ENCODE measurements at regions of chr12 and their contacts with region 1.

Region 1: DNA sequence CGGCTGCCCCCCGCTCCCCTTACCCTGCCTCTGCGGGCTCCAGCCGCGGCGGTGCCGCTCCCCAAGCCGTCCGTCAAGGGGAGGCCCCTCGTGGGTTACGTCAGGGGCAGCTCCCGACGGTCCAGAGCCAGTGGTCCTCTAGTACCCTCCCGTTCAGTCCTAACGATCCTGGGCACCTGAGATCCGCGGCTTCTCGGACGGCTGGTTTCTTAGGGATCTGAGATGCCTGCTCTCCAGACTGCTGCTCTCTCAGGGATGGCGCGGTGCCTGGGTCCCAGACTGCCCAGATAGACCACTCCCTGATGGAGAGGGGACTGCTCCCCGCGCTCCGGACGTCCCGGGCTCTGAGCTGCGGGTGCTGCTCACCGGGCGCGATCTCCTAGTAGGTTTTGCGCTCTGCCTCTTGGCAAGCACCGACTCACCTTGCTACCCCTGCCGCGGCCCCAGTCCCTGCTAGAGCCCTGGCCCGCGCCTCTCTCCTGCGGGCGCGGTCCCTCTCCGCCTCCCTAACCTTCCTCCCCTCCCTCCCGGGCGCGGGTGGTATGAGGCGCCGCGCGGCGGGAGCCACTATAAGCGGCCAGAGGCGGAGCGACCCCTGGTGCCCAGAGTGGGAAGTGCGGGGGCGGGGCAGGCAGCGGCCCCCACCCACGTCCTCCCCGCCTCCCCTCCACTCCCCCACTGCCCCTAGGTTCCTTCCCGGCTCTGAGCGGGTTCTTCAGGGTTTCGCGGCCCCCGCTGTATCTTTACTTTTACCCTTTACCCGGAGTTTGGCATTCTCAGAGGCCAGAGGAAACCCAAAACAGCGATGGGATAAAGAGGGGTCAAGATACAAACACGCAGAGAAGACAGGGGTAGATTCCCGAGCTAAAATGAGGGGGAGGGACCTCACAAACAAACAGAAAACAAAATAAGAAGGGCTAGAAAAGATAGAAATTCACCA is at the start of gene C1QL4:
- DNase-seq: no peak
- H3K4me3 ChIP-seq: peak within 1 kb of the TSS; percentile 54
- CTCF ChIP-seq: peak; percentile 93

Region 2: DNA sequence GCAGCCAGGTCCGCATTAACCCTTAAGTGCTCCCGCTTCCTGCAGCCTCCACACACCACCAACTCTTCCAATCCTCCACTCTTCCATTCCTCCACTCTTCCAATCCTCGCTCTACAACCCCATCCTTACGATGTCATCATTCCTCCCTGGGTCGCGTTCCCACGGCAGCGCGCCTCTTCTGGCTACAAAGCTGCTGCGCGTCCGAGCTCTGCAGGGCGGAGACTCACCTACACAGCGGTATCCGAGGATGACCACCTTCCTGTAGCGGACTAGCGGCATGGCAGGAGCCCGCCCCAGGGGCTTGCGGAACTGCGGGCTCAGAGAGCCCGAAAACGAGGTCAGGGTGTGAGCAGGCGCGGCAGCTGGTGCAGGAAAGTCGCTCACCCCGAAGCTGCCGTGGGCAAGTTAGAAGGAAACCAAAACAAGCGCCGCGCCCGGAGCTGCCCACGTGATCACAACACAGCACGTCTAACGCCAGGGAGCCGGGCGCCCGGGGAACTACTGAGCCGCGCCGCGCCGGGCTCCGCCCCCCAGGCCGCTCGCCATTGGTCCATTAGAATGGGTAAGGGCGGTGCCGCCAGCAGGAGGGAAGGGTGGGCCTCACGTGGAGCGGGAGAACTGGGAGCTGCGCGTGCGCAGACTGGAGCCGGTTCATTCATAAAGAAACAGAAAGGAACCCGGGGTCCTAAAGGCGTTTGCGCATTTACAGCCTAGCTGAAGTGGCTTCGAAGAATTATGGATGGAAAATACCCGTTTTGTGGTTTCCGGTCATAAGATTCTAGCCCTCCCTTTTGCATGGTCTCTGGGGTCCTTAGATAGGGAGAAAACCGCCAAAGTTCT is 267.2 kb before region 1 on chr12 and contains the start of gene RHEBL1:
- CTCF ChIA-PET with region 1: no interaction called
- POLR2A ChIA-PET with region 1: no interaction called
- DNase-seq: peak; percentile 54
- H3K4me3 ChIP-seq: peak within 1 kb of the TSS; percentile 77
- CTCF ChIP-seq: no peak

Region 3: DNA sequence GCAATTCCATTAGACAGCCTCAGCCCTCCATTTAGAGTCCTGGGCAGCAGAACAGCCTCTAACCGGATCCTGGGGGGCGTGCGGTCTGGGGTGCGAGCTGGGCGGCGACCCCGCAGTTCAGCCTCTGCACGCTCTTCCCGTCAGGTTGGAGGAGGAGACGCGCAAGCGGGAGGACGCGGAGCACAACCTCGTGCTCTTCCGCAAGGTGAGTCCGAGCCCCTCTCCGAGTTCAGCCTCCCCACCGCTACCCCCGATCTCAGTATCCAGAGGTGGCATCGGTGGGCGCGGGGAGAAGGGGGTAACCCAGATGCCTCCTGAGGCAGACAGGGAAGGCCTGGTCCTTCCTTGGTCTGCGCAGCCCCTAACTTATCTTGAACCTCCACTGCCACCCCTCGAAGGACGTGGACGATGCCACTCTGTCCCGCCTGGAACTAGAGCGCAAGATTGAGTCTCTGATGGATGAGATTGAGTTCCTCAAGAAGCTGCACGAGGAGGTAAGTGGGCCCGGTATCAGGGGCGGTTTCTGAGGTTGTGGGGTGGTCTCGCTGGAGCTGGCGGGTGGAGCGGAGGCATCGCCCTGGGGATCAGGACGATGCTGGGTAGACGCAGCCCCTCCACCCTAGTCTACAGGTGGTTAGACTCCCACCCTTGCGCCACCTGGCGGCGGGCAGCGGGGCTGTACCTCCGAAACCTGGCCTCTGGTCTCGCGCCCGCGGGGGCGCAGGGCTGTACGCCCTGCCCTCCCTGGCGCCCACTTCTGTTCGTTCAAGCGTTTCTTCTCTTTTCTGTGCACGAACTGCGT is 40.7 kb before region 1 on chr12:
- CTCF ChIA-PET with region 1: interaction called, 51 read pairs
- POLR2A ChIA-PET with region 1: no interaction called
- DNase-seq: no peak
- H3K4me3 ChIP-seq: no peak overlapping the region
- CTCF ChIP-seq: peak; percentile 74

Region 4: DNA sequence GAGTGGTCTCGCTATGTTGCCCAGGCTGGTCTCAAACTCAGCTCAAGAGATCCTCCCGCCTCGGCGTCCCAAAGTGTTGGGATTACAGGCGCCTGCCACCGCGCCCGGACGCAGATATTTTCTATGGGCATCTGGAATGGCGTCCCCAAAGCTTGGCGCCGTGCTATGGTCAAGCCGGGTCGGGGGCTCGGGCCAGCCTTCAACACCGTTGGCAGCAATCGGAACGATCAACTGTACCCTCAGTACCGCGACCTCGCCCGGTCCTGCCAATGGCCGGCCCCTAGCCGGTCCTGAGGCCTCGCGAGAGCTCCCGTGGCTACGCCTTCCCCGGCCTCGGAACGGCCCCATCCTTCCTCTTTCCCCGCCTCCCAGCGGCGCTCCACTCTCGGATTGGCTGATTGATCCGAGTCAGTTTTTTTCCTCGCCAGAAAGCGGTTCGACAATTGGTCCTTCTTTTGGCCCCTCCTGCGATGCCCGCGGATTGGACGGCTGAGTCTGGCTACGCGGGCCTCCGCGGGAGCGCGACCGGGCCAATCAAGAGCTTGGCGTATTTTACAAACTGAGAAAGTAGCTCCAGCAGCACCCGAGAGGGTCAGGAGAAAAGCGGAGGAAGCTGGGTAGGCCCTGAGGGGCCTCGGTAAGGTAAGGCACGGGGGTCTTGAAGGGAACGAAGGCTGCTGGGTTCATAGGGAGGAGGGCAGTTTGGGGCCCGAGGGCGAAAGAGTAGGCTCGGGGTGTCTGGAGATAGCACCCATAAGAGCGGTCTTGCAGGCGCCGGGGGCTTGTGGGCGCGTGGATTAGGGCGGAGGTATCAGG is 14.0 kb before region 1 on chr12 and contains the start of gene TROAP:
- CTCF ChIA-PET with region 1: interaction called, 89 read pairs
- POLR2A ChIA-PET with region 1: interaction called, 5 read pairs
- DNase-seq: peak; percentile 80
- H3K4me3 ChIP-seq: peak within 1 kb of the TSS; percentile 78
- CTCF ChIP-seq: no peak

Region 5: DNA sequence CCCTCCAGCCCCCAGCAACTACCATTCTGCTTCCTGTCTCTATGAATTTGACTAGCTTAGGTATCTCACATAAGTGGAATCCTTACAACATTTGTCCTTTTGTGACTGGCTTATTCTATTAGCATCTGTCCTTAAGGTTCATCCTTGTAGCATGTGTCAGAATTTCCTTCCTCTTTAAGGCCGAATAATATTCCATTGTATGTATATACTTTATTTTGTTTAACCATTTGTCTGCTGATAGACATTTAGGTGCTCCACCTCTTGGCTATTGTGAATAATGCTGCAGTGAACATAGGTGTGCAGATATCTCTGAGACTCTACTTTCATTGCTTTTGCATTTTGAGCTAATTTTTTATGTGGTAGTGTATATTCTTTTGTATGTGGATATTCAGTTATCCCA is 106.0 kb after region 1 on chr12:
- CTCF ChIA-PET with region 1: no interaction called
- POLR2A ChIA-PET with region 1: no interaction called
- DNase-seq: no peak
- H3K4me3 ChIP-seq: no peak overlapping the region
- CTCF ChIP-seq: no peak

Measured in AG04449 (cell line).